Left cardiac atrium (tissue), 4 donors: ENCODE measurements at regions of chr2 and their contacts with region 1.

Region 1: DNA sequence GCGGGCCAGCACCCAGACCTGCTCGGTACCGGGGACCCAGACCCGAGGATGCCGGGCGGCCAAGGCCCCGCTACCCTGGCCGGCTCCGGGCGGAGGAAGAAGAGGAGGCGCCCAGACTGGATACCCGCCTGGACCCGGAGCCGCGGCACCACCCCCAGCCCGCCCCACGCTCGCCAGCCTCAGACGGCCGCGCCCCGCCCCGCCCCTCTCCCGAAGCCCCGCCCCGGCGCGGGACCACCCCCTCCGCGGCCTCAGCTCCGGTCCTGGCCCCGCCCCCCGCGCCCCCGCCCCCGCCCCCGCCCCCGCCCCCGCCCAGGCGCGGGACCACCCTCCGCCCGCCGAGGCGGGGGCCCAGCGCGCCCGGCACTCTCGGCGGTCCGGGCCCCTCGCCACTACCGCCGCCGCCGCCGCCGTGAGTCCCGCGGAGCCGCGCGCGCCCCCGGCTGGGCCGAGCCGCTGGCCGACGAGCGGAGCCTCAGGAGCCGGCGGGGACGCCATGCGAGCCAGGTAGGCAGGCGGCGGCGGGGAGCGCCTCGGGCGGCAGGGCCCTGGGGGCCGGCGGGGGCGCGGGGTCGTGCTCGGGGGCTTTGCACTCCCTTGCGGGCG is at the start of gene SH3BP4:
- DNase-seq: peak; percentile 87
- ATAC-seq: peak; percentile 93 to 94
- total RNA-seq, gene SH3BP4: 15.1 to 27.0 TPM

Region 2: DNA sequence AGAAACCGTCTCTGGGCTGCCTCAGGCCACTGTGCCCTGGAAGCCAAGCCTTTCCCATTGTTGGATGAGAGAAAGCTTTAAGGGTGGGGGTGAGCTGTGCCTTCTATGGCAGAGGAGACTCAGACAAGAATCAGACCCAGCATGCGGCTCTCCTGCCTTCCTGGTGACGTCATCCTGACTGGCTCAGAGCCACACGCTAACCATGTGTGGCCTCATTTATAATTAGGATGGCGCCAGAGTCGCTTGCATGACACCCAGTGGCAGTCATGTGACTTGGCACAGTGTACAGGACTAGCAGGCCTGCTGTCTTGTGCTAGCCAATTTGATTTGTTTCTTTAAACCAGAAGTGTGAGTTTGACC is 99.2 kb after region 1 on chr2:
- intact Hi-C with region 1: loop called in 1 of 2 experiments (anchors 5 kb)
- DNase-seq: peak; percentile 95
- ATAC-seq: peak; percentile 89 to 93

Region 3: DNA sequence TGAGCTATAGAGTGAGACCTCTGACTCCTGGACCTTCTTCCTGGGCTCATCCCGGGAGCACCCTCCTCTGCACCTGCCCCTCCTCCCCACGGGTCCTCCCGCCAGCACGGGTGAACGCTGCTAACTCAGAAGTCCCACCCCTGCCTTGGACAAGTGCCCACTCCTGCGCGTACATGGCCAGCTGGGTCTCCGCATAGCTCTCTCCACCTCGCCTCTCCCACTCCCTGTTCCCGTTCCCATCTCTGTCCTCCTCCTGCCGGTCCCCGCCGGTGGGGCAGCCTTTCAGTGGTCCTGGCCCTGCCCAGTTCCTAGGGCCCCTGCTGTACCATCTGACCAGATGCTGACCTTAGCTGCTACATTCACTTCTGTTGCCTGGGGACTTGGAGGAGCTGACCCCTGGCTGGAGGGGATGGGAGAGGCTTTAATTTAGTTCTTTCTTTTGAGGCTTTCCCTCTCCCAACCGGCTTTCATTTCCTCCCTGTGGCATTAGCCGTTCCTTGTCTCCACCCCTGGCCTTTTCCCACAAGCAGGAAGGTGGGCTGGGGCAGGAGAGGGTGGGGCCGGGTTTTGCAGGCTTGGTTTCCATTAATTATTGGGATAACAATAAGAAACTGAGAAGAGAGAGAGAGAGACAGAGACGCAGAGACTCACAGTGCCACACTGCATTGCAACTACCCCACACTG is 136.2 kb after region 1 on chr2:
- intact Hi-C with region 1: loop called in 1 of 2 experiments (anchors 10 kb)
- DNase-seq: peak; percentile 74
- ATAC-seq: peak; percentile 76 to 83